ENCODE measurements at regions of chr6 and their contacts with region 1.

Region 1: DNA sequence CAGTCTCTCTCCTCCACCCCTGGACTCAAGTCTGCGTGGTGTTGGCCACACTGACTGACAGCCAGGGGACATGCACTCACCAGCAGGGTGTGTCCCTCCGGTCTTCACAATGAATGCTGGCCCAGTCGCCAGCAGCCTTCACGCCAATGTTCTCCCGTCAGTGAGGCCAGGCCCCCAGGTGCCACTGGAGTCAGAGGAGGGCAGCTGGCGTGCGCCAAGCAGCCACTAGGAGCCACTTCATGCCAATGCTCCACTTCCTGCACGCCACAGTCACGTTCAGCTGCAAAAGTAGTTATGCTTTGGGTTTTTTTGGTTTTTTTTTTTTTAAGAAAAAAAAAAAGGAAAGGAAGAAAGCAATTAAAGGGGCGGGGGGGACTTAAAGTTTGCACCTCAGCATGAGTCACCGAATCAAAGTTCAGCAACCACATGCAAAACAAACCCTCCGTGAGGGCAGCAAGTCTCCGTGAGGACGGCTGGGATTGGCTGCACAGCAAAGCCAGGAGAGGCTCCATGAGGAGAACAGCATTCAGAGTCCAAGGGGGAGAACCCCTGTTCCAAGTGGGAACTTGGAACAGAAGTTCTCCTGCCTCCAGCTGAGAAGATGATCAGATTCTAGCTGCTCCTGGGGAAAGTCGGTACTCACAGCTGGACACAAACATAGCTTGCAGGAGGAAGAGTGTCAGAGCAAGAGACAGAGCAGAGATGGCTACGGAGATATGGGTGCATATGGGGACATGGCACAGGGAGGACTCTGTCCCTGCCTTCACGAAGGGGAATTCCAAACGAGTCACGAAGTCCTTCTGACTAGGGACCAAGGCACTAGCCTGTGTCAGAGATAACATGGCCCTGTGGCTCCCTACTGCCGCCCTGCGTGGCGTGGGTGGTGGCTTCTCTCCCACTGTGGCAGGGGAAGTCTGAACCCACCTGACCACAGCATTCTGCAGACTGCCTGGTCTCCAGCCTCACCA is at the start of gene ZC3H12D:
- DNase-seq: peak; percentile 65 to 93 (median 82)
- ATAC-seq: peak; percentile 80
- H3K4me3 ChIP-seq: peak within 1 kb of the TSS; percentile 45 to 55
- H3K4me3 Mint-ChIP-seq: peak within 1 kb of the TSS; percentile 86
- H3K27ac ChIP-seq: peak within 1 kb of the TSS; percentile 69 to 92
- H3K27ac Mint-ChIP-seq: peak within 1 kb of the TSS; percentile 95
- H3K4me1 ChIP-seq: peaks cover 43% of the 10 kb centered on the region
- H3K4me1 Mint-ChIP-seq: peaks cover 63% of the 10 kb centered on the region
- H3K27me3 ChIP-seq: no peaks in the 10 kb centered on the region
- H3K27me3 Mint-ChIP-seq: no peaks in the 10 kb centered on the region
- CTCF ChIP-seq: peak; percentile 66
- total RNA-seq, gene ZC3H12D: 45.9 to 50.0 TPM

Region 2: GRCh38 chr6:149335924-149336608 is 149.0 kb before region 1 on chr6:
- CTCF ChIA-PET with region 1: no interaction called
- POLR2A ChIA-PET with region 1: no interaction called
- intact Hi-C with region 1: no loop called
- DNase-seq: peak in 1 of 9 experiments; percentile 18
- ATAC-seq: no peak
- H3K4me3 ChIP-seq: no peak overlapping the region
- H3K4me3 Mint-ChIP-seq: peak overlapping the region; percentile 21
- H3K27ac ChIP-seq: no peak overlapping the region
- H3K27ac Mint-ChIP-seq: peak overlapping the region; percentile 18
- H3K4me1 ChIP-seq: peaks cover 64% of the 10 kb centered on the region
- H3K4me1 Mint-ChIP-seq: peaks cover 87% of the 10 kb centered on the region
- H3K27me3 ChIP-seq: no peaks in the 10 kb centered on the region
- H3K27me3 Mint-ChIP-seq: no peaks in the 10 kb centered on the region
- CTCF ChIP-seq: no peak

Region 3: GRCh38 chr6:149473080-149474052 is 11.7 kb before region 1 on chr6:
- CTCF ChIA-PET with region 1: interaction called, 15 read pairs
- POLR2A ChIA-PET with region 1: interaction called, 5 read pairs
- intact Hi-C with region 1: loop called in 1 of 2 experiments (anchors 1 kb)
- DNase-seq: peak in 3 of 9 experiments; percentile 37 to 57 (median 43)
- ATAC-seq: peak; percentile 74
- H3K4me3 ChIP-seq: no peak overlapping the region
- H3K4me3 Mint-ChIP-seq: peak overlapping the region; percentile 6
- H3K27ac ChIP-seq: no peak overlapping the region
- H3K27ac Mint-ChIP-seq: peak overlapping the region; percentile 64
- H3K4me1 ChIP-seq: peaks cover 31% of the 10 kb centered on the region
- H3K4me1 Mint-ChIP-seq: peaks cover 40% of the 10 kb centered on the region
- H3K27me3 ChIP-seq: no peaks in the 10 kb centered on the region
- H3K27me3 Mint-ChIP-seq: no peaks in the 10 kb centered on the region
- CTCF ChIP-seq: no peak

Region 4: GRCh38 chr6:149499066-149499465 is 14.0 kb after region 1 on chr6:
- CTCF ChIA-PET with region 1: interaction called, 22 read pairs
- POLR2A ChIA-PET with region 1: interaction called, 24 read pairs
- intact Hi-C with region 1: loop called (anchors 1 kb)
- DNase-seq: no peak
- ATAC-seq: no peak
- H3K4me3 ChIP-seq: no peak overlapping the region
- H3K4me3 Mint-ChIP-seq: no peak overlapping the region
- H3K27ac ChIP-seq: no peak overlapping the region
- H3K27ac Mint-ChIP-seq: peak overlapping the region; percentile 50
- H3K4me1 ChIP-seq: peaks cover 24% of the 10 kb centered on the region
- H3K4me1 Mint-ChIP-seq: peaks cover 38% of the 10 kb centered on the region
- H3K27me3 ChIP-seq: no peaks in the 10 kb centered on the region
- H3K27me3 Mint-ChIP-seq: no peaks in the 10 kb centered on the region
- CTCF ChIP-seq: no peak

Region 5: GRCh38 chr6:149508485-149508884 is 23.5 kb after region 1 on chr6:
- CTCF ChIA-PET with region 1: interaction called, 9 read pairs
- POLR2A ChIA-PET with region 1: interaction called, 5 read pairs
- intact Hi-C with region 1: loop called in 1 of 2 experiments (anchors 1 kb)
- DNase-seq: peak in 4 of 9 experiments; percentile 39 to 86 (median 65)
- ATAC-seq: peak; percentile 91
- H3K4me3 ChIP-seq: no peak overlapping the region
- H3K4me3 Mint-ChIP-seq: no peak overlapping the region
- H3K27ac ChIP-seq: peak overlapping the region; percentile 28 to 51
- H3K27ac Mint-ChIP-seq: peak overlapping the region; percentile 19
- H3K4me1 ChIP-seq: peaks cover 22% of the 10 kb centered on the region
- H3K4me1 Mint-ChIP-seq: peaks cover 28% of the 10 kb centered on the region
- H3K27me3 ChIP-seq: no peaks in the 10 kb centered on the region
- H3K27me3 Mint-ChIP-seq: no peaks in the 10 kb centered on the region
- CTCF ChIP-seq: no peak

Region 6: DNA sequence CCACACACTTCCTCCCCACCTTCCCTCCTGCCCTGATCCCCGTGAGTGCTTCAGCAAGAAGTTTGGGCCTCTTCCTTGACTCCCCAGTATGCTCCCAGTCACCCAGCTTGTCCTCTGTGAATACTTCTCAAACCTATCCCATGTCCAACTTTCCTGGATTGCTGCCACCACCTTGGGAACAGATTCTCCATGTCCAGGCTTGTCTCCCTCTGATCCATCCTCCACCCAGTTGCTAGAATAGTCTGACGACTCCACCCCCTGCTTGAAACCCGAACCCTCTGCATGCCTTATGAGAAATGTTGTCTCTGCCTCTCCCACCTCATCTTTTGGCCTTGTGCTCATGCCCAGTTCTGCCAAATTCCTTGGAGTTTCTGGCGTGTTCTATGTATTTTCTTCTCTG is 765.8 kb after region 1 on chr6:
- CTCF ChIA-PET with region 1: no interaction called
- POLR2A ChIA-PET with region 1: no interaction called
- intact Hi-C with region 1: no loop called
- DNase-seq: no peak
- ATAC-seq: no peak
- H3K4me3 ChIP-seq: no peak overlapping the region
- H3K4me3 Mint-ChIP-seq: no peak overlapping the region
- H3K27ac ChIP-seq: no peak overlapping the region
- H3K27ac Mint-ChIP-seq: no peak overlapping the region
- H3K4me1 ChIP-seq: no peaks in the 10 kb centered on the region
- H3K4me1 Mint-ChIP-seq: no peaks in the 10 kb centered on the region
- H3K27me3 ChIP-seq: no peaks in the 10 kb centered on the region
- H3K27me3 Mint-ChIP-seq: peaks cover under 1% of the 10 kb centered on the region
- CTCF ChIP-seq: no peak

Measured in CD8-positive, alpha-beta T cell (primary cell).